PC-3 (cell line): ENCODE measurements at regions of chr15 and their contacts with region 1.

Region 1: DNA sequence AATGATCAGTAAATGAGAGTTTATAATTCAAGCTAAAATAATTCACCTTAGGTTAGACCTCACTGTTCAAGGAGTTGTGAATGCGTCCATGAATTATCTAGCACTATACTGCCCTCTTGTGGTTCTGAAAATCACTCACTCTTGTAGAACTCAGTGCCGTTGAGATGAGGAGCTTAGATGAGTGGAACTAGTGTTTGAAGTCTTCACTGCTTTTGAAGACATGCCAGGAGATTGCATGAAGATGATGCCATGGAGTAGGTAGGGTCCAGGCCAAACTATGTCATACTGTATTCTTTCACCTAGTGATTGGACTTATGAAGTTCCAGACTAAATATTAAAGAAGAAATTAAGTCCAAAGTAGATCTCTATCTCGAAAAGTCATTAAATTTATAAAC is 28.8 kb downstream of the LYSMD4 start:
- DNase-seq: peak; percentile 93
- ATAC-seq: peak; percentile 61
- H3K4me3 ChIP-seq: no peak overlapping the region
- H3K27ac ChIP-seq: no peak overlapping the region
- H3K4me1 ChIP-seq: peaks cover 33% of the 10 kb centered on the region
- H3K27me3 ChIP-seq: no peaks in the 10 kb centered on the region
- CTCF ChIP-seq: peak; percentile 73

Region 2: DNA sequence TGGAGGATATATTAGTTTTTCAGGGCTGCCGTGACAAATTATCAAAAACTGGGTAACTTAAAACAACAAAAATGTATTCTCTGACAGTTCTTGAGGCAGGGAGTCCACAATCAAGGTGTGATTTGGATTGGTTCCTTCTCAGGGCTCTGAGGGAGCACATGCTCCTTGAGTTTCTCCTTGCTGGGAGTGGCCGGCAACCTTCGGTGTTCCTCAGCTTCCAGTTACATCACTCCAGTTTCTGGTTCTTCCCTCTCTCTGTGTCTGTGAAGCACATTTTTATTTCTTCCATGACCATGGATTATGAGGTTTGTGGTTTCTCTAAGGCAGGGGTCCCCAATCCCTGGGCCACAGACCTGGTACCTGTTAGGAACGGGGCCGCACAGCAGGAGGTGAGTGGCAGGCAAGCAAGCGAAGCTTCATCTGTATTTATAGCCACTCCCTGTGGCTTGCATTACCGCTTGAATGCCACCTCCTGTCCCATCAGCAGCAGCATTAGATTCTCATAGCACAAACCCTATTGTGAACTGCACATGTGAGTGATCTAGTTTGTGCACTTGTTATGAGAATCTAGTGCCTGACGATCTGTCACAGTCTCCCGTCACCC is 428.8 kb before region 1 on chr15:
- CTCF ChIA-PET with region 1: interaction called, 10 read pairs
- POLR2A ChIA-PET with region 1: no interaction called
- intact Hi-C with region 1: loop called (anchors 5 kb)
- DNase-seq: no peak
- ATAC-seq: no peak
- H3K4me3 ChIP-seq: no peak overlapping the region
- H3K27ac ChIP-seq: no peak overlapping the region
- H3K4me1 ChIP-seq: no peaks in the 10 kb centered on the region
- H3K27me3 ChIP-seq: no peaks in the 10 kb centered on the region
- CTCF ChIP-seq: no peak

Region 3: GRCh38 chr15:99282121-99282520 is 422.3 kb before region 1 on chr15:
- CTCF ChIA-PET with region 1: interaction called, 3 read pairs
- POLR2A ChIA-PET with region 1: no interaction called
- intact Hi-C with region 1: loop called (anchors 1 kb)
- DNase-seq: peak; percentile 4
- ATAC-seq: no peak
- H3K4me3 ChIP-seq: no peak overlapping the region
- H3K27ac ChIP-seq: no peak overlapping the region
- H3K4me1 ChIP-seq: no peaks in the 10 kb centered on the region
- H3K27me3 ChIP-seq: no peaks in the 10 kb centered on the region
- CTCF ChIP-seq: no peak

Region 4: GRCh38 chr15:99409097-99409473 is 295.4 kb before region 1 on chr15:
- CTCF ChIA-PET with region 1: interaction called, 18 read pairs
- POLR2A ChIA-PET with region 1: no interaction called
- intact Hi-C with region 1: loop called (anchors 1 kb)
- DNase-seq: peak; percentile 70
- ATAC-seq: peak; percentile 99
- H3K4me3 ChIP-seq: no peak overlapping the region
- H3K27ac ChIP-seq: no peak overlapping the region
- H3K4me1 ChIP-seq: peaks cover 8% of the 10 kb centered on the region; the same call in 1 of the 2 replicates
- H3K27me3 ChIP-seq: no peaks in the 10 kb centered on the region
- CTCF ChIP-seq: peak; percentile 68

Region 5: GRCh38 chr15:99565299-99566156 is 138.9 kb before region 1 on chr15 and contains the start of gene MEF2A:
- CTCF ChIA-PET with region 1: interaction called, 3 read pairs
- POLR2A ChIA-PET with region 1: no interaction called
- intact Hi-C with region 1: loop called (anchors 10 kb)
- DNase-seq: peak; percentile 88
- ATAC-seq: peak; percentile 79
- H3K4me3 ChIP-seq: peak within 1 kb of the TSS; percentile 84
- H3K27ac ChIP-seq: peak within 1 kb of the TSS; percentile 81
- H3K4me1 ChIP-seq: peaks cover 18% of the 10 kb centered on the region; the same call in 1 of the 2 replicates
- H3K27me3 ChIP-seq: no peaks in the 10 kb centered on the region
- CTCF ChIP-seq: no peak
- total RNA-seq, gene MEF2A: 16.5 and 21.3 TPM in 2 replicates

Region 6: GRCh38 chr15:99733268-99734039 is 29.0 kb after region 1 on chr15 and contains the start of gene LYSMD4:
- CTCF ChIA-PET with region 1: interaction called, 5 read pairs
- POLR2A ChIA-PET with region 1: no interaction called
- intact Hi-C with region 1: loop called (anchors 2 kb)
- DNase-seq: peak; percentile 92
- ATAC-seq: peak; percentile 97
- H3K4me3 ChIP-seq: peak within 1 kb of the TSS; percentile 91
- H3K27ac ChIP-seq: no peak within 1 kb of the TSS
- H3K4me1 ChIP-seq: no peaks in the 10 kb centered on the region
- H3K27me3 ChIP-seq: no peaks in the 10 kb centered on the region
- CTCF ChIP-seq: no peak
- total RNA-seq, gene LYSMD4: 7.8 and 8.9 TPM in 2 replicates